ENCODE measurements at regions of chr22 and their contacts with region 1.

Region 1: GRCh38 chr22:50250555-50251476 is at the start of gene HDAC10:
- DNase-seq: peak in 1 of 2 experiments; percentile 92
- H3K4me3 ChIP-seq: peak within 1 kb of the TSS; percentile 54 to 80 (median 72)
- H3K27ac ChIP-seq: no peak within 1 kb of the TSS
- H3K4me1 ChIP-seq: peaks cover 0 to 16% (median 11%) of the 10 kb centered on the region in 4 experiments; a peak in 6 of 7 replicates
- H3K27me3 ChIP-seq: no peaks in the 10 kb centered on the region
- CTCF ChIP-seq: no peak
- EP300 ChIP-seq: no peak
- POLR2A ChIP-seq: peak in 1 of 2 experiments; percentile 44; a peak in 2 of 3 replicates
- RAD21 ChIP-seq: no peak
- total RNA-seq, gene HDAC10: 21.2 and 26.4 TPM in 2 replicates

Region 2: GRCh38 chr22:50030297-50031188 is 220.3 kb before region 1 on chr22:
- CTCF ChIA-PET with region 1: no interaction called
- POLR2A ChIA-PET with region 1: no interaction called
- DNase-seq: peak; percentile 57 to 92
- H3K4me3 ChIP-seq: peak overlapping the region in 1 of 4 experiments; percentile 51; a peak in 2 of 8 replicates
- H3K27ac ChIP-seq: no peak overlapping the region
- H3K4me1 ChIP-seq: peaks cover 0 to 3% (median 0%) of the 10 kb centered on the region in 4 experiments; a peak in 2 of 7 replicates
- H3K27me3 ChIP-seq: peaks cover 2 to 24% (median 11%) of the 10 kb centered on the region in 4 experiments; a peak in 6 of 7 replicates
- CTCF ChIP-seq: peak; percentile 90 to 98 (median 92)
- EP300 ChIP-seq: no peak
- POLR2A ChIP-seq: no peak
- RAD21 ChIP-seq: peak; percentile 96 to 97

Region 3: DNA sequence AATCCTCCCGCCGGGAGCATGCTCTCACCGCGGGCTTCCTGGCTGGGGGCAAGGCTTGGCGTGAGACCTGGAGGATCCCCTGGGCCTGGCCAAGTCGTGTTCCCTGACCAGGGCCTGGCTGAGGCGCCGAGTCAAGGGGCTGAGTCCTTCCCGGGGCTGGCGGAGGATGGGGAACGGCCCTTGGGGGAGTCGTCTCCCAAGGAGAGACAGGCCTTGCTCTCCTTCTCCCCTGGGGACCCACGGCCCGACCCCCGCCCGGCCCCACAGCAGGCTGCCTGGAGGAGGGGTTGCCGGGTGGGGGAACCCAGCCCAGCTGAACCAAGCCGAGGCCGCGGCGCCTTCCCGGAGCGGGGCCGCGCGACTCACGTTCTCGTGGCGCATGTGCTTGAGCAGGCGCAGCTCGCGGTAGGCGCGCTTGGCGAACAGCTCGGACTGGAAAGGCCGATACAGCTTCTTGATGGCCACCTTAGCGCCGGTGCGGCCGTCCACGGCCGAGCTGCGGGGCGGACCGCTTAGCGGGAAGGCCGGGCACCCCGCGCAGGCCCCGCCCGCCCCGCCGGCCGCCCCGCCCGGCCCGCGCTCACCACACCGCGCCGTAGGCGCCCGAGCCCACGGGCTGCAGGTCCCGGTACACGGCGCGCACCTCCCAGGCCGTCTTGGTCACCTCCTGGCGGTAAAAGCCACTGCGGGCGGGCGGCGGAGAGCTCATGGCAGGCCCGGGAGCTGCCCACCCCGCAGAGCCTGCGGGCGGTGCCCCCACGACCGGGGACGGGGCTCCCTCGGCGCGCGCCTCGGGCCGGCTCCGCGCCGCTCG is 10.2 kb after region 1 on chr22:
- CTCF ChIA-PET with region 1: interaction called, 30 read pairs
- POLR2A ChIA-PET with region 1: interaction called, 5 read pairs
- DNase-seq: peak in 1 of 2 experiments; percentile 72
- H3K4me3 ChIP-seq: peak overlapping the region; percentile 35 to 73 (median 48)
- H3K27ac ChIP-seq: no peak overlapping the region
- H3K4me1 ChIP-seq: peaks cover 0 to 20% (median 10%) of the 10 kb centered on the region in 4 experiments; a peak in 6 of 7 replicates
- H3K27me3 ChIP-seq: peaks cover 1 to 22% (median 18%) of the 10 kb centered on the region in 4 experiments; a peak in 6 of 7 replicates
- CTCF ChIP-seq: no peak
- EP300 ChIP-seq: no peak
- POLR2A ChIP-seq: no peak
- RAD21 ChIP-seq: no peak

Region 4: DNA sequence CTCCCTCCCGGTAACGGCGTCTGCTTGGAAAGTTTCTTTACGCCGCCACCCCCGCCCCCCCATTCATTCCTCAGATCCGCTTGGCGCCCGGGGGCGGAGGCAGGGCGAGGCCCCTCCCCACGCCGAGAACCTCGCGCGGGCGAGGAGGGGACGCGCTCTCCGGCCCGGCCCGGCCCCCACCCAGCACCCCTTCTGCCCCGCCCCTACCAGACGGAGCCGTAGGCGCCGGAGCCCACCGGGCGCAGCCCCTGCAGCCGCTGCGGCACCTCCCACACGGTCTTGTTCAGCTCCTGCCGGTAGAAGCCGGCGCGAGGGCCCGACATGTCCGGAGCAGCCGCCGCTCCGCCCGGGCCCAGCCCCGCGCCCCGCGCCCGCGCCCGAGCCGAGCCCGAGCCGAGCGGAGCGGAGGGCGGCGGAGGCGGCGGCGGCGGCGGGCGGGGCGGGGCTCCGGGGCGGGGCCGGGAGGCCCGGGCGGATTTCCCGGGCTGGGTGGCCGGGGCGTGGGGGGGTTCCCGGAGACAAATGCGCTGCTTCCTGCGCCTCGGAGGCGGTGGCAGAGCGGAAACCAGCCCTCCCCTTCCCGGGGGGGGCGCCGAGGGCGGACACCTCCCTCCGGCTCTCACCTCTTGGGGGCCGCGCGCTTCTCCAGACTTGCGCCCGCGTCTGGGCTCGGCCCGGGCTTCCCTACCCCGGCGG is 19.3 kb after region 1 on chr22 and contains the start of gene MAPK11:
- CTCF ChIA-PET with region 1: interaction called, 30 read pairs
- POLR2A ChIA-PET with region 1: interaction called, 6 read pairs
- DNase-seq: no peak
- H3K4me3 ChIP-seq: peak within 1 kb of the TSS in 3 of 4 experiments; percentile 19 to 58 (median 36); a peak in 7 of 8 replicates
- H3K27ac ChIP-seq: no peak within 1 kb of the TSS
- H3K4me1 ChIP-seq: peaks cover 2 to 14% (median 9%) of the 10 kb centered on the region in 4 experiments; a peak in 6 of 7 replicates
- H3K27me3 ChIP-seq: peaks cover 24 to 53% (median 41%) of the 10 kb centered on the region in 4 experiments; a peak in 6 of 7 replicates
- CTCF ChIP-seq: no peak
- EP300 ChIP-seq: no peak
- POLR2A ChIP-seq: no peak
- RAD21 ChIP-seq: no peak
- total RNA-seq, gene MAPK11: 1.5 TPM in 2 replicates